ENCODE measurements at regions of chr19 and their contacts with region 1.

Region 1: GRCh38 chr19:55503502-55504251 is 15.4 kb downstream of the SSC5D start:
- DNase-seq: peak; percentile 95
- ATAC-seq: peak; percentile 98
- H3K4me3 Mint-ChIP-seq: peak overlapping the region; percentile 64
- H3K27ac Mint-ChIP-seq: peak overlapping the region; percentile 86
- H3K4me1 Mint-ChIP-seq: peaks cover 23% of the 10 kb centered on the region
- H3K27me3 Mint-ChIP-seq: peaks cover 4% of the 10 kb centered on the region

Region 2: GRCh38 chr19:55258828-55259539 is 244.7 kb before region 1 on chr19 and contains the start of gene PPP6R1:
- CTCF ChIA-PET with region 1: interaction called, 12 read pairs
- DNase-seq: peak; percentile 96
- ATAC-seq: peak; percentile 81
- H3K4me3 Mint-ChIP-seq: peak within 1 kb of the TSS; percentile 99
- H3K27ac Mint-ChIP-seq: peak within 1 kb of the TSS; percentile 100
- H3K4me1 Mint-ChIP-seq: peaks cover 27% of the 10 kb centered on the region
- H3K27me3 Mint-ChIP-seq: no peaks in the 10 kb centered on the region
- total RNA-seq, gene PPP6R1: 263 to 291 TPM

Region 3: GRCh38 chr19:55385740-55386529 is 117.7 kb before region 1 on chr19 and contains the start of gene RPL28:
- CTCF ChIA-PET with region 1: interaction called, 16 read pairs
- DNase-seq: peak; percentile 99
- ATAC-seq: peak; percentile 72
- H3K4me3 Mint-ChIP-seq: peak within 1 kb of the TSS; percentile 96
- H3K27ac Mint-ChIP-seq: peak within 1 kb of the TSS; percentile 96
- H3K4me1 Mint-ChIP-seq: peaks cover 61% of the 10 kb centered on the region
- H3K27me3 Mint-ChIP-seq: no peaks in the 10 kb centered on the region
- total RNA-seq, gene RPL28: 2,244 to 2,759 TPM

Region 4: DNA sequence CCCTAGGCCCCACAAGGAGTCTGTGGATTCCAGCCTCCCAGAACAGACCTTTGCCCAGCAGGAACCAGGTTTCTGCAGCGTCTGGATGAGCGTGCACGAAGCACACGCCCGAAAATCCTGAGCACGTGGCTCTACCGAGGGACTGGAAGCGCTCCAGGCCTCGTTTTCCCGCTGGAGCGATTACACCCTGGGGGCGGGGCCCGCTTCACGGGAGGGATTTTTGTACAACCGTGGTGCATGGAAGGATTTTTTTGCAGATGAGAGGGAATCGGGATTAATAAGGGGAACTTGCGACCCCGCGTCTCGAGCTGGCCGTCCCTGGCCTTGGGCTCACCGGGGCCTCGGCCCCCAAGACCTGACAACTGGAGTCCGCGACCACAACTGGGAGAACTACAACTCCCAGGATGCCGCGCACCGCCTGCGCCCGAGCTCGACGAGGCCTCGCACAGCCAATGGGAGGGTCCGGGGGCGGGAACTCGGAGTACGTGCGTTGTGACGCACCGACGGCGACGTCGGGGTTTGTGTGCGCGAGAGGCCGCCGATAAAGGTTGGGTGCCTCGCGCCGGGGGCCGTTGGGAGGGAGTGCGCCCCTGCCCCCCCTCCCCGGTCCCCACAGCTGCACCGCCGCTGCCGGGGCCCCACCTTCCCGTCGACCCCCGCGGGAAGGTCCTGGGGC is 27.4 kb before region 1 on chr19 and contains the start of gene ZNF628:
- CTCF ChIA-PET with region 1: interaction called, 47 read pairs
- DNase-seq: peak; percentile 99
- ATAC-seq: peak; percentile 94
- H3K4me3 Mint-ChIP-seq: peak within 1 kb of the TSS; percentile 88
- H3K27ac Mint-ChIP-seq: peak within 1 kb of the TSS; percentile 93
- H3K4me1 Mint-ChIP-seq: peaks cover 34% of the 10 kb centered on the region
- H3K27me3 Mint-ChIP-seq: no peaks in the 10 kb centered on the region
- total RNA-seq, gene ZNF628: 8.8 to 8.9 TPM

Region 5: GRCh38 chr19:55588738-55589137 is 85.1 kb after region 1 on chr19:
- CTCF ChIA-PET with region 1: no interaction called
- DNase-seq: no peak
- ATAC-seq: no peak
- H3K4me3 Mint-ChIP-seq: no peak overlapping the region
- H3K27ac Mint-ChIP-seq: no peak overlapping the region
- H3K4me1 Mint-ChIP-seq: peaks cover 13% of the 10 kb centered on the region
- H3K27me3 Mint-ChIP-seq: peaks cover 23% of the 10 kb centered on the region

Region 6: GRCh38 chr19:55599468-55600279 is 96.0 kb after region 1 on chr19 and contains the start of gene FIZ1:
- CTCF ChIA-PET with region 1: interaction called, 36 read pairs
- DNase-seq: peak; percentile 98
- ATAC-seq: peak; percentile 77
- H3K4me3 Mint-ChIP-seq: peak within 1 kb of the TSS; percentile 86
- H3K27ac Mint-ChIP-seq: peak within 1 kb of the TSS; percentile 99
- H3K4me1 Mint-ChIP-seq: peaks cover 27% of the 10 kb centered on the region
- H3K27me3 Mint-ChIP-seq: no peaks in the 10 kb centered on the region
- total RNA-seq, gene FIZ1: 13.0 to 15.7 TPM

Region 7: GRCh38 chr19:55632463-55632834 is 128.8 kb after region 1 on chr19:
- CTCF ChIA-PET with region 1: interaction called, 72 read pairs
- DNase-seq: peak; percentile 95
- ATAC-seq: peak; percentile 43
- H3K4me3 Mint-ChIP-seq: no peak overlapping the region
- H3K27ac Mint-ChIP-seq: peak overlapping the region; percentile 38
- H3K4me1 Mint-ChIP-seq: peaks cover 46% of the 10 kb centered on the region
- H3K27me3 Mint-ChIP-seq: peaks cover 4% of the 10 kb centered on the region

Region 8: DNA sequence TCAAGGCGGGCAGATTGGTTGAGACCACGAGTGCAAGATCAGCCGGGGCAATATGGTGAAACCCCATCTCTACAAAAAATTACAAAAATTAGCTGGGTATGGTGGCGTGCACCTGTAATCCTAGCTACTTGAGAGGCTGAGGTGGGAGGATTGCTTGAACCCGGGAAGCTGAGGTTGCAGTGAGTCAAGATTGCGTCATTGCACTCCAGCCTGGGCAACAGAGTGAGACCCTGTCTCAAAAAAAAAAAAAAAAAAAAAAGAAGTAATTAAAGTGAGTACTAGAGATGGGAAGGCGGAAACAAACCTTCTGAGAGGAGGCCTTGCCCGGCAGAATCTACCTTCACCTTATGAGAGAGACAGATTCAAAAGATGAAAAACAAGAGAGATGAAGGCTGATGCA is 219.8 kb after region 1 on chr19:
- CTCF ChIA-PET with region 1: no interaction called
- DNase-seq: no peak
- ATAC-seq: no peak
- H3K4me3 Mint-ChIP-seq: no peak overlapping the region
- H3K27ac Mint-ChIP-seq: no peak overlapping the region
- H3K4me1 Mint-ChIP-seq: no peaks in the 10 kb centered on the region
- H3K27me3 Mint-ChIP-seq: peaks cover 8% of the 10 kb centered on the region